Activated CD8-positive, alpha-beta T cell treated with anti-CD3 and anti-CD28 coated beads for 36 hours (primary cell): ENCODE measurements at regions of chr18 and their contacts with region 1.

Region 1: DNA sequence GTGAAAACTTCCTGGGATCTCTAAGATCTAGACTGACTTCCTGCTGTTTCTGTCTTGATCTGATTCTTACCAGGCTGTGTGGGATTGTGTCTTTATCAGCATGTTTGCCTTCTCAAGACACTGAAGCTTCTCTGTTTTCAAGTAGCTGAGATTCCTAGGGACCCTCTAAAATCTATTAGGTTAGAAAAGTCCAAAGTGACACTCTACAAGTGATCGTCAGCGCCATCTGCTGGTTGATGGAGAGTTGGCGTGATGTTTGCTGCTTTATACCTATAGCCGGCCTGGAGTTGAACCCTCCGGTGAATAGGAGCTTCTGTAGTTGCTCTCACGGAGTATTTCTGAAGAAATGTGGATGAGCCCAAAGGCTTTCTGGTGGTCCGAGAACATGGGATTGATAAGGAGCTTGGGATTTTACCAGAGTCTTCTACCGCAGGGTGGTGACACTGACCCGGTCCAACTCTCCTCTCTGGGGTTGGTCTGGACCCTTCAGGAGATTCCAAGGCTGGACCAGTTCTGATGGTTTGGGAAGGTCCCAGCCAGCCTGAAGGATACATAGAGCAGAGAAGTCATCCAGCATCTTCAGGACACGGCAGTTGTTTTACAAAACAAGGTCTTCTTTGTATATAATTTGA is 96.0 kb upstream of the TTC39C start:
- DNase-seq: peak; percentile 92
- ATAC-seq: peak; percentile 94
- H3K4me3 Mint-ChIP-seq: no peak overlapping the region
- H3K27ac Mint-ChIP-seq: no peak overlapping the region
- H3K4me1 Mint-ChIP-seq: peaks cover 6% of the 10 kb centered on the region
- H3K27me3 Mint-ChIP-seq: no peaks in the 10 kb centered on the region
- CTCF ChIP-seq: peak; percentile 94

Region 2: GRCh38 chr18:23812546-23813440 is 105.7 kb before region 1 on chr18:
- CTCF ChIA-PET with region 1: interaction called, 10 read pairs
- POLR2A ChIA-PET with region 1: no interaction called
- intact Hi-C with region 1: no loop called
- DNase-seq: no peak
- ATAC-seq: no peak
- H3K4me3 Mint-ChIP-seq: no peak overlapping the region
- H3K27ac Mint-ChIP-seq: no peak overlapping the region
- H3K4me1 Mint-ChIP-seq: peaks cover 25% of the 10 kb centered on the region
- H3K27me3 Mint-ChIP-seq: no peaks in the 10 kb centered on the region
- CTCF ChIP-seq: peak; percentile 72

Region 3: GRCh38 chr18:23837591-23837990 is 80.9 kb before region 1 on chr18:
- CTCF ChIA-PET with region 1: interaction called, 28 read pairs
- POLR2A ChIA-PET with region 1: no interaction called
- intact Hi-C with region 1: no loop called
- DNase-seq: no peak
- ATAC-seq: no peak
- H3K4me3 Mint-ChIP-seq: no peak overlapping the region
- H3K27ac Mint-ChIP-seq: no peak overlapping the region
- H3K4me1 Mint-ChIP-seq: peaks cover 3% of the 10 kb centered on the region
- H3K27me3 Mint-ChIP-seq: no peaks in the 10 kb centered on the region
- CTCF ChIP-seq: no peak

Region 4: GRCh38 chr18:23893653-23894052 is 24.9 kb before region 1 on chr18:
- CTCF ChIA-PET with region 1: interaction called, 13 read pairs
- POLR2A ChIA-PET with region 1: interaction called, 3 read pairs
- intact Hi-C with region 1: no loop called
- DNase-seq: no peak
- ATAC-seq: no peak
- H3K4me3 Mint-ChIP-seq: no peak overlapping the region
- H3K27ac Mint-ChIP-seq: no peak overlapping the region
- H3K4me1 Mint-ChIP-seq: no peaks in the 10 kb centered on the region
- H3K27me3 Mint-ChIP-seq: no peaks in the 10 kb centered on the region
- CTCF ChIP-seq: no peak

Region 5: GRCh38 chr18:23938043-23938756 is 19.7 kb after region 1 on chr18:
- CTCF ChIA-PET with region 1: interaction called, 23 read pairs
- POLR2A ChIA-PET with region 1: no interaction called
- intact Hi-C with region 1: no loop called
- DNase-seq: peak; percentile 51
- ATAC-seq: peak; percentile 60
- H3K4me3 Mint-ChIP-seq: no peak overlapping the region
- H3K27ac Mint-ChIP-seq: no peak overlapping the region
- H3K4me1 Mint-ChIP-seq: peaks cover 62% of the 10 kb centered on the region
- H3K27me3 Mint-ChIP-seq: peaks cover 2% of the 10 kb centered on the region
- CTCF ChIP-seq: no peak

Region 6: DNA sequence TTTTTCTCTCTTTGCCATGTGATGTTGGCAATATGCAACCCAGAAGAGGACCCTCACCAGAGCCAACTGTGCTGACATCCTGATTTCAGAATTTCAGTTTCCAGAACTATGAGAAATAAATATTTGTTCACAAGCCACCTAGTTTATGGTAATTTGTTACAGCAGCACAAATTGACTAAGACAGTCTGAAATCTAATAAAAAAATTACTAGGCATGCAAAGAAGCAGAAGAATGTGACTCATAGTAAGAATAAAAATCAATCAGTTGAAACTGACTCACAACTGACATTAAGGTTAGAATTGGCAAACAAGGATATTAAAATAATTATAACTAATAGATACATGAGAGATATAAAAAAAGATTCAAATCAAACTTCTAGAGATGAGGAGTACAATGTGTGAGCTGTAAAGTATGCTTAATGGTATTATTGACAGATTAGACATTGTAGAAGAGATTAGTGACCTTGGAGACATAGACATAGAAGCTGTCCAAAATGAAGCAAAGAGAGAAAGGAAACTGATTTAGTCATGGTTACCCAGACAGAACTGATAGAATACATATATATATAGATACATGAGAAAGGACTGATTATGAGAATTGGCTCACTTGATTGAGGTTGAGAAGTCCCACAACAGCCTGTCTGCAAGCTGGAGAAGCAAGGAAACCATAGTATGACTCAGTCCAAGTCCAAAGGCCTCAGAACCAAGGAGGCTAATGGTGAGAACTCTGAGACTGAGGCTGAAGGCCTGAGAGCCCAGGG is 68.3 kb after region 1 on chr18:
- CTCF ChIA-PET with region 1: no interaction called
- POLR2A ChIA-PET with region 1: no interaction called
- intact Hi-C with region 1: no loop called
- DNase-seq: no peak
- ATAC-seq: peak; percentile 72
- H3K4me3 Mint-ChIP-seq: no peak overlapping the region
- H3K27ac Mint-ChIP-seq: peak overlapping the region; percentile 75
- H3K4me1 Mint-ChIP-seq: peaks cover 53% of the 10 kb centered on the region
- H3K27me3 Mint-ChIP-seq: no peaks in the 10 kb centered on the region
- CTCF ChIP-seq: no peak

Region 7: GRCh38 chr18:24118750-24119577 is 200.4 kb after region 1 on chr18:
- CTCF ChIA-PET with region 1: interaction called, 10 read pairs
- POLR2A ChIA-PET with region 1: no interaction called
- intact Hi-C with region 1: no loop called
- DNase-seq: peak; percentile 90
- ATAC-seq: peak; percentile 80
- H3K4me3 Mint-ChIP-seq: no peak overlapping the region
- H3K27ac Mint-ChIP-seq: no peak overlapping the region
- H3K4me1 Mint-ChIP-seq: peaks cover 24% of the 10 kb centered on the region
- H3K27me3 Mint-ChIP-seq: no peaks in the 10 kb centered on the region
- CTCF ChIP-seq: peak; percentile 95